ENCODE measurements at regions of chr1 and their contacts with region 1.

Region 1: DNA sequence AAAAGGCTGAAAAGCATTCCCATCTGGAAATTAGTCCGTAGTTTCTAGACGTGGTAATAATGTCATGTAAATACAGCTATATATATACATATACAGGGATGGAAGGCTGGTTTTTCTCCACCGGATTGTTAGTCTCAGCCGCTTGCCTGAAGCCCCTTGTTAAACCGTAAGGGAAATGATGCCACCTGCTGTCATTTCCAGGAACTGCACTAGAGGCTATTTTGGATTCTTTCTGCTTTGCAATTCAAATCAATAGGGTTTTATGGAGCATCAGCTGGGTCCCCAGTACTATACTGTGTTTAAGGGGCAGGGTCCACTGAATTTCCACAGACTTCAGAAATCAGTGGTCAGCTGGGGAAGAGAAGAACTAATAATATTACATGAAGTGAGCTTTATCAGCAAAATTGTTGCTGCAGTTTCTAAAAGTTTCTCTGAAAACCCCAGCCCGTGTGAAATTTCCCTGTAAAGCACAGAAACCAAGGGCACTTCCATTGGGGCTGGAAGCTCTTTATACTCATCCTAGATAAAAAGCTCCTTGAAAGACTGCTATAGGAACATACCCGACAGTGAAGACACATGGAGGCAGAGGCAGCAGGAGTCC is 33.8 kb upstream of the MPZL1 start:
- DNase-seq: peak in 2 of 4 donors; percentile 72 to 82
- ATAC-seq: peak; percentile 73
- H3K4me3 ChIP-seq: no peak overlapping the region
- H3K27ac ChIP-seq: no peak overlapping the region
- H3K4me1 ChIP-seq: peaks cover 5 to 34% of the 10 kb centered on the region in 2 donors
- H3K27me3 ChIP-seq: no peaks in the 10 kb centered on the region
- CTCF ChIP-seq: peak; percentile 88 to 91

Region 2: DNA sequence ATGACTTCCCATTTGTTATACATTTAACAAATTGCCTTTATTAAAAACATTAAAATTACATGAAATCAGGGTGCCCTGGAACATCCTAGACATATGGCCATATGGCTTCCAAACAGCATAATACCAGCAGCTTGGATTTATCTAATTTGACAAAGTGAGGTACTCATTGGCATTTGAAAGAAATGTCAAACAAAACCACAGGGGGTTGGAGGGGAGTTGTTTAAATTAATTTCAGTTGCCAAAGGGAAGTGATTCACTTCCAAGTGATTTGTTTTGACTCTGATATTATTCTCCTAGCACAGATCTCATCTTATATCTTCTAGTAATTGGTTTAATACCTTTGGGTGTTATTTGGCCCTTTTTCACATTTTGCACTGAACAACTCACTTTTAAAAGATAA is 491.9 kb before region 1 on chr1:
- intact Hi-C with region 1: no loop called
- DNase-seq: no peak
- ATAC-seq: no peak
- H3K4me3 ChIP-seq: no peak overlapping the region
- H3K27ac ChIP-seq: no peak overlapping the region
- H3K4me1 ChIP-seq: no peaks in the 10 kb centered on the region
- H3K27me3 ChIP-seq: no peaks in the 10 kb centered on the region
- CTCF ChIP-seq: no peak

Region 3: GRCh38 chr1:167529829-167530474 is 158.1 kb before region 1 on chr1:
- intact Hi-C with region 1: no loop called
- DNase-seq: peak in 1 of 4 donors; percentile 12
- ATAC-seq: no peak
- H3K4me3 ChIP-seq: no peak overlapping the region
- H3K27ac ChIP-seq: no peak overlapping the region
- H3K4me1 ChIP-seq: no peaks in the 10 kb centered on the region
- H3K27me3 ChIP-seq: no peaks in the 10 kb centered on the region
- CTCF ChIP-seq: no peak

Region 4: GRCh38 chr1:167573026-167573425 is 115.0 kb before region 1 on chr1:
- intact Hi-C with region 1: no loop called
- DNase-seq: no peak
- ATAC-seq: no peak
- H3K4me3 ChIP-seq: no peak overlapping the region
- H3K27ac ChIP-seq: no peak overlapping the region
- H3K4me1 ChIP-seq: no peaks in the 10 kb centered on the region
- H3K27me3 ChIP-seq: no peaks in the 10 kb centered on the region
- CTCF ChIP-seq: no peak

Region 5: GRCh38 chr1:167599957-167600581 is 88.0 kb before region 1 on chr1:
- intact Hi-C with region 1: loop called (anchors 2 to 5 kb)
- DNase-seq: peak in 2 of 4 donors; percentile 33 to 42
- ATAC-seq: peak; percentile 74
- H3K4me3 ChIP-seq: no peak overlapping the region
- H3K27ac ChIP-seq: peak overlapping the region in 1 of 2 donors; percentile 79
- H3K4me1 ChIP-seq: peaks cover 20 to 42% of the 10 kb centered on the region in 2 donors
- H3K27me3 ChIP-seq: no peaks in the 10 kb centered on the region
- CTCF ChIP-seq: peak; percentile 45 to 51

Measured in left lung (tissue), 14 donors.